Thyroid gland (tissue), 4 donors: ENCODE measurements at regions of chr15 and their contacts with region 1.

Region 1: DNA sequence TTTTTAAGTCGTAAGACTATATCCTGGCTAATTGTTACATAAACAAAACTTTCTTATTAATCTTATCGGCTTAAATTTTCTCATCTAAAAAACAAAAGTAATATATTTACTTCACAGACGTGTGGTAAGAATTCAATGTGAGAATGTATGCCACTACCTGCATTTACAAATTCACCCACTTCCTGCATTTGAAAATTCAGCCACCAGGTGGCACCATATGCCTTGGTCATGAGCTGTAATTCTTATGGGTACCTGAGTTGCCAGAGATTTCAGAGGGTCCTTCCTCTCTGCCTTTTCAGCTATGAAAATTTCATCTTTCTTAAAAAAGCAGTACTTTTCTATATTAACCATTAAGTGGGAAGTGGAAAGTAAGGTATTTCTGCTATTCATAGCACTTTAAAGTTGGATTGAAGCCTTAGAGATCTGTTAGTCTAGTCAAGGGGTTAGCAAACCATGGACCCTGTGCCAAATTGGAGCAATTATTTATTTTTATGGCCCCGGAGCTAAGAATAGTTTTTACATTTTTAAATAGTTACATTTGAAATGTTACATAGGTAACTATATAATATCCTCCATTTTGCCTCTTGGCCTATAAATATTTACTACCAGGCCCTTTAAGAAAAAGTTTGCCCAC is 127.8 kb downstream of the HCN4 start:
- DNase-seq: peak; percentile 78
- H3K4me3 ChIP-seq: no peak overlapping the region
- H3K27ac ChIP-seq: peak overlapping the region in 1 of 3 donors; percentile 0
- H3K4me1 ChIP-seq: no peaks in the 10 kb centered on the region
- H3K27me3 ChIP-seq: no peaks in the 10 kb centered on the region
- CTCF ChIP-seq: peak; percentile 80 to 96 (median 90)
- POLR2A ChIP-seq: no peak

Region 2: DNA sequence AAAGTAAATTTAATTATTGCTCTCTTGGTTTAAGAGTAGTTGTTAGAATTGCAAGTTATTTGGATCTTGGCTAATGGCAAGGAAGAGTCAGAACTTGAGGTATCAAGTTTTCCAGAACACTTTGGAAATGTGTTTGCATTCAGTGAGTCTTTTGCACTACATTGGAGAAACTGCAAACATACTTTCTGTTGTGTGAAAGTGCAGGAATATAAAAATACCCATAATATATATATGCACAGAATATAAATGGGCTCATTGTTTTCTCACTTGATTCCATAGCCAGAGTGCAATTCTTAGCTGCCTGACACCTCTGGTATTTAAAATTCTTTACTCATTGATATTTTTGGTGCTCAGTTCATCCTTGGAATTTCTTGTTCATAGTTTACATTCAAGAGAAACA is 34.9 kb after region 1 on chr15:
- intact Hi-C with region 1: loop called (anchors 5 kb)
- DNase-seq: no peak
- H3K4me3 ChIP-seq: no peak overlapping the region
- H3K27ac ChIP-seq: no peak overlapping the region
- H3K4me1 ChIP-seq: peaks cover 4 to 14% of the 10 kb centered on the region in 2 donors
- H3K27me3 ChIP-seq: no peaks in the 10 kb centered on the region
- CTCF ChIP-seq: no peak
- POLR2A ChIP-seq: no peak

Region 3: DNA sequence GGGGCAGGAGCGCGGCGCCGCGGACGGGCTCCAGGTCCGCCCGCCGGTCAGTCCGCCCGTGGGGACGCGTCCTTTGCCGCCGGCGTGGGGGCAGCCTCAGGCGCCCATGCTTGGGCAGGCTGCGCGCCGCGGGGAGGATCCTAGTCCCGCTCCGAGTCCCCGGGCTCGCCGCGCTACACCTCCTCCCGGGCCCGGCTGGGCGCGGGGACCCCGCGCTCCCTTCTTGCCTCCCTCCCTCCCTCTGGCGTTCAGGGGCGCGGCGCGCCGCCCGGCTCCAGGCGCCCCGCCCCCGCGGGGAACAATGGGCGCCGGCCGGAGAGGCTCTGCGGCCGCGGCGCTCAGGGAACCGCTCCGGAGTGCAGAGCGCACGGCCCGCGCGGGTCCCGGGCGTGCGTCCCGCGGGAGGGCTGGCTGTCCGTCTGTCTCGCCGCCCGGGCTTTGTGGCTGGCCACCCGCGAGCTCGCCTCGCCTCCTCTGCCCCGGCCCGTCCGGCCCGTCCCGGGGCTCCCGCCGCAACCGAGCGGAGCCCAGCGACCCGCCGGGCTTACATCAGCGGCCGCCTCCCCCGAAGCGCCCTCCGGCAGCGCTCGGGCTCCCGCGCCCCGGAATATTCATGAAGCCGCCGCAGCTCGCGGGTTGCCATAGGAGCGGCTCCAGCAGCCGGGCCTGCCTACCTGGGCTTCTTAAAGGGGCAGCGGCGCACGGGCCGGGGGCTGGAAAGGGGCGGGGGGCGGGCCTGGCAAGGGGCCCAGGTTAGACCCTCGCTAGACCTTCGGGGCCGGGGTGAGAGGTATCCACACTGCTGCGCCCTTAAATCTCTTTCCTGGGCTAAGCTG is 127.5 kb after region 1 on chr15 and contains the start of gene HCN4:
- intact Hi-C with region 1: no loop called
- DNase-seq: peak in 1 of 2 donors; percentile 5
- H3K4me3 ChIP-seq: peak within 1 kb of the TSS in 1 of 3 donors; percentile 28
- H3K27ac ChIP-seq: no peak within 1 kb of the TSS
- H3K4me1 ChIP-seq: peaks cover 0 to 16% of the 10 kb centered on the region in 2 donors
- H3K27me3 ChIP-seq: peaks cover 12% of the 10 kb centered on the region
- CTCF ChIP-seq: no peak
- POLR2A ChIP-seq: no peak
- total RNA-seq, gene HCN4: under 0.01 to 0.10 TPM in 2 of 4 donors, not detected in the others